ENCODE measurements at regions of chr2 and their contacts with region 1.

Region 1: DNA sequence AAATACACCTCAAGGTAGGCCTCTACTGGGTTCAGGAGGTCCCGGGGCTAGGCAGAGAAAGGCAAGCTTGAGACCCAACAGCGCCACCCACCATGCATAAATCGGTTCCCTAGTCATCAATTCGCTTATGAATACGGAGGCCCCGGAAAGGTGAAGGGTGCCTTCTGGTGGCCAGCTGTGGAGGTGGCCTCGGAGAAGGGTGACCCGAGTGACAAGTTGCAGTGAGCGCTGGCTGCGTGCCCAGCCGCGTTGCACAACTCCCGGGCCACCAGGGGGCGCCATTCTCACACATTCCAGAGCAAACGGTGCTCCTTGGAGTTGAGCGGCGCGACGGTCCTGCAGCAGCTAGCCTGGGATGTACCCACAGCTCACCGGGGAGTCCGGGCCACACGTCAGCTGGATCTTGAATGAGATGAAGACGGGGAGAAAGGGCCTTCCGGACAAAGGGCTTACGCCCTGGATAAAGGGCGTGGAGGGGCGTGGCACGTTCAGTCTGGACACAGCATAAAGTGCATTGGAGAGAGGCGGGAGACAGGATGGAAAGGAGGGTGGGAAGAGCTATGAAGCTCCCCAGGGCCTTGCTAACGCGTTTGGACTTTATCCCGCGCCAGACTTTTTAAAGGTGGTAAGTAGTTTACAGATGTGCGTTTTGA is 20.4 kb downstream of the TMSB10 start:
- DNase-seq: peak; percentile 99
- H3K4me3 Mint-ChIP-seq: peak overlapping the region; percentile 86
- H3K27ac Mint-ChIP-seq: peak overlapping the region; percentile 90
- H3K4me1 Mint-ChIP-seq: peaks cover 64% of the 10 kb centered on the region
- H3K27me3 Mint-ChIP-seq: no peaks in the 10 kb centered on the region

Region 2: GRCh38 chr2:84741296-84741765 is 184.5 kb before region 1 on chr2:
- CTCF ChIA-PET with region 1: interaction called, 13 read pairs
- DNase-seq: peak; percentile 69
- H3K4me3 Mint-ChIP-seq: no peak overlapping the region
- H3K27ac Mint-ChIP-seq: peak overlapping the region; percentile 75
- H3K4me1 Mint-ChIP-seq: peaks cover 20% of the 10 kb centered on the region
- H3K27me3 Mint-ChIP-seq: peaks cover 11% of the 10 kb centered on the region

Region 3: DNA sequence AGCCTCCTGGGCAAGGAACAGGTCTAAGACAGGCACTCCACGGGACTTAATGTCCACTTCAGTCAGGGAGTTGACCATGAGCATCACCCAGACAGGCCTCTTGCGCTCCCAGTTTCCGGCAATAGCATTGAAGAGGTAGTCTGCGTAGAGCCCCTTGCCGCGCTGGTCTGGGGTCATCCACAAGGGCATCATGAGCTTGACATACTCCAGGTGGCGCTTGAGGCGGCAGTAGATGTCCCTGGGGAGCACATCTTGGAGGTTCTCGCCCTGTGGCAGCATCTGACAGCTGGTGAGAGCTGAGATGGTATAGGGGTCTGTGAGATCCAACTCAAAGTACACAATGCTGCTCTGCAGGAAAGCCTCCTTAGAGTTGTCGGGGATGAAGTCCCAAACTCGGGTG is 55.5 kb before region 1 on chr2:
- CTCF ChIA-PET with region 1: interaction called, 134 read pairs
- DNase-seq: peak; percentile 20
- H3K4me3 Mint-ChIP-seq: no peak overlapping the region
- H3K27ac Mint-ChIP-seq: no peak overlapping the region
- H3K4me1 Mint-ChIP-seq: peaks cover 84% of the 10 kb centered on the region
- H3K27me3 Mint-ChIP-seq: no peaks in the 10 kb centered on the region

Region 4: DNA sequence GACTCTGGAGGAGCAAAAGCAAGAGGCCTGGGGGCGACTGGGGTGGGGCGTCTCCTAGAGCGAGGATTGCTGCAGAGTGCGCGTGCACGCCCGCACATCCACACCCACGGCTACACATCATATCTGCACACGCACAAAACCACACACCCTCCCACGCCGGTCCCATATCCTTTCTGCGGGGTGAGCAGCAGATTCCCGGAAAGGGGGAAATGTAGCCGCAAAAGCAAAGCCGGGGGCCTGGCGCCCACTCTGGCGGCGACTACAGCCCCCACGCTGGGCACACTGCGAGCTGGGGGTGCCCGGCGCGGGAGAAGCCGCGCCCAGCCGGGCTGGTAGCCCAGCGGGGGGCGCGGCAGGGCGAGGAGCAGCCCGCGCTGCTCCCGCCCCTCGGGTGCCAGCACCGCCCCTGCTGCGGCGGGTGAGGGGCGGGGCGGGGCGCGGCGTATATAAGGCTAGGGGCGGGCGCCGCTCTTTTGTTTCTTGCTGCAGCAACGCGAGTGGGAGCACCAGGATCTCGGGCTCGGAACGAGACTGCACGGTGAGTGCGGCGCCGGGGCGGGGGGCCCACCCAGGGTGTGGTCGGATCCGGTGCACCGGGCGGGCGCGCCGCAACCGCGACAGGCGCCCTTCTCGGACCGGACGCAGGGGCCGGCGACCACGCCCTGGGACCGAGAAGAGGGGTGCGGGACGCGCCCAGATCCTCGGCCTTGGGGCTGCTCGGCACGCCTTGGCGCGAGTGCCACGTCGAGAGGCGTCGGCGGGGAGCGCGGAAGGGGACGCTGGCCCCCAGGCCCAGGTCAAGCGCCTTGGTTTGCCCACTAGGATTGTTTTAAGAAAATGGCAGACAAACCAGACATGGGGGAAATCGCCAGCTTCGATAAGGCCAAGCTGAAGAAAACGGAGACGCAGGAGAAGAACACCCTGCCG is 20.4 kb before region 1 on chr2 and contains the start of gene TMSB10:
- CTCF ChIA-PET with region 1: interaction called, 60 read pairs
- DNase-seq: peak; percentile 93
- H3K4me3 Mint-ChIP-seq: peak within 1 kb of the TSS; percentile 94
- H3K27ac Mint-ChIP-seq: peak within 1 kb of the TSS; percentile 97
- H3K4me1 Mint-ChIP-seq: peaks cover 67% of the 10 kb centered on the region
- H3K27me3 Mint-ChIP-seq: peaks cover 5% of the 10 kb centered on the region

Region 5: DNA sequence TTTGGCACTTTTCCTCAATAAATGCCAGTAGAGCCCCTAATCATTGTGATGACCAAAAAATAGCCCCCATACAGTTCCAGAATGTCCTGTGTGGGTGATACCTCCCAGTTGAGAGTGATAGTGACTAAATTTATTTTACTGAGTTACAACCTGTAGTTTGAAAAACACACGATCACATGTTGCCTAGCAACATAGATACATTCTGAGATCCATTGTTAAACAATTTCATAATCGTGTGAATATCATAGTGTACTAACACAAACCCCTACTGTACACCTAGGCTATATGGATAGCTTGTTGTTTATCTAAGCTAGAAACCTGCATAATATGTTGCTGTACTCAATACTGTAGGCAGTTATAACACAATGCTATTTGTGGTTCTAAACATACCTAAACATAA is 75.7 kb after region 1 on chr2:
- CTCF ChIA-PET with region 1: interaction called, 10 read pairs
- DNase-seq: no peak
- H3K4me3 Mint-ChIP-seq: no peak overlapping the region
- H3K27ac Mint-ChIP-seq: peak overlapping the region; percentile 42
- H3K4me1 Mint-ChIP-seq: peaks cover 48% of the 10 kb centered on the region
- H3K27me3 Mint-ChIP-seq: no peaks in the 10 kb centered on the region

Region 6: GRCh38 chr2:85288244-85288725 is 362.4 kb after region 1 on chr2:
- CTCF ChIA-PET with region 1: interaction called, 32 read pairs
- DNase-seq: no peak
- H3K4me3 Mint-ChIP-seq: no peak overlapping the region
- H3K27ac Mint-ChIP-seq: no peak overlapping the region
- H3K4me1 Mint-ChIP-seq: peaks cover 32% of the 10 kb centered on the region
- H3K27me3 Mint-ChIP-seq: peaks cover 4% of the 10 kb centered on the region

Measured in activated naive CD4-positive, alpha-beta T cell treated with anti-CD3 and anti-CD28 coated beads, Interleukin-2, amount 10 ng/mL, durations not matched to agents 7 days and 5 days (primary cell).